ENCODE measurements at regions of chr19 and their contacts with region 1.

Region 1: DNA sequence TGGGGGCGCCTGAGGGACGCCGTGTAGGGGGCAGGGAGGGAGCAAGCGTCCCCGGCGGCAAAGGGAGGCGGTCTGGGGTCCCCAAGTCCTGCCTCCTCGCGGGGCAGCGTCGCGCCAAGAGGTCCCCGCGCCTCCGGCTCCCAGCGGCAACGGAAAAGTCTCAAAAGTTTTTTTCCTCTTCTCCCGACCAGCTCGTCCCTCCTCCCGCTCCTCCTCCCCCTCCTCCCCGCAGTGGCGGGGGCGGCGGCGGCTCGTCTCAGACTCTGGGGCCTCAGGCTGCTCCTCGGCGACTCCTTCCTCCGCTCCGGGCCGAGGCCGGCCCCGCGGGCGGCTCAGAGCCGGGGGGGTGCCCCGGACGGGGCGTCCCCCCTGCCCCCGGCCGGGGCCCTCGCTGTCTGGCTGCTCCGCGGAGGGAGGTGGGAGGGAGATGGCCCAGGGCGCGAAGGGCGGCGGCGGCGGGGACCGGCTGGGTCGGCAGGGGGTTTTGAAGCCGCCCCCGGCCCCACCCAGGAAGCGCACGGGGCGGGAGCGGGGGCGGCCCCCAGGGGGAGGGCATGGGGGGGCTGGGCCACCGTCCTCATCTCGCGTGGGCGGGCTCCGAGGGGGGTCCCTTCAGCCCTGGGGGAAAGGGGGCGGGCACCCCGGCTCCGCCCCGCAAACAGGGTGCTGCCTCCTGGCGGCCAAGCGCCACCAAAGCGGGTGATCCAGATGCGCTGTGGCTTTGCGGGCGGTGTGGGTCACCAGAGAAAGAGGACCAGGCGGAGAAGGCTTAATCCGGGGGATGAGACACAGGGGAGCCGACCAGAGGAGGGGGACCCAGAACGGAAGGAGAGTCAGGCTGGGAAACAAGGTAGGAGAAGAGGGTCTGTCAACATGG is at the start of gene TGFB1:
- DNase-seq: peak; percentile 96
- ATAC-seq: peak; percentile 45
- H3K4me3 Mint-ChIP-seq: peak within 1 kb of the TSS; percentile 96
- H3K27ac Mint-ChIP-seq: peak within 1 kb of the TSS; percentile 97
- H3K4me1 Mint-ChIP-seq: peaks cover 58% of the 10 kb centered on the region
- H3K27me3 Mint-ChIP-seq: no peaks in the 10 kb centered on the region
- total RNA-seq, gene TGFB1: 86.2 to 99.0 TPM

Region 2: DNA sequence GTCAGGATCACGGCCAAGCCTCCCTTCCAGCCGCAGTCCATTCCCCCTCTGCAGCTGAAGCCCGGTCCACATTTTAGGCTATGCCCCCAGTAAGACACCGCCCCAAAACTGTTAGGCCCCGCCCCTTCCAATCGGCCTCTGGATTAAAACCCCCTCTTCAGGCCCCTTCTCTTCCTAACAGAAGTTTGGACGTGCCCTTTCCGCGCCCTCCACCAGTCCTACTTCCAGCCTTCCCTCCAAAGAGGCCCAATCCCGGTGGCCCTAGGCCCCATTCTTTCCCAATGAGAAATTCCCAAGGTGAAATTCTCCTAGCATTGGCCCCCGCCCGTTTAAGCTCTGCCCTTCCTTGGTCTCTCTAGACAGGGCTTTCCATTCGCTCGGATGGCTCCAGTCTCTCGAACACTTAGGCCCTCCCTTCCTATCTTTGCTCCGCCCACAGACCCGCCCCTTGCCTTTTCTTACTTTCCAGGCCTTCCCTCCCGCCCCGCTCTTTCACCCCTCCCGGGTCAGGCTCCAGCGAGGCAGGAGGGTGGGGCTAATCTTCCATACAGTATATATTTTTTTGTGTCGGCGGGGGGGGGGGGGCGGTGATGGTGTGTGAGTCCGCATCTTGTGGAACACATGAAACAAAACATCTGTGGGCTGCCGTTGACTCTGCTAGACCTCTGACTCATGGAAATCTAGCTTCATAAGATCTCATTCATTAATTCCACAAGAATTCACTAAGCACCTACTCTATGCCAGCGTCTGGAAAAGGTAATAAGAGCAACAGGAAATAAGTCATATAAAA is 738.9 kb before region 1 on chr19:
- CTCF ChIA-PET with region 1: no interaction called
- POLR2A ChIA-PET with region 1: no interaction called
- intact Hi-C with region 1: loop called in 1 of 2 experiments (anchors 5 kb)
- DNase-seq: peak; percentile 98
- ATAC-seq: peak; percentile 55
- H3K4me3 Mint-ChIP-seq: peak overlapping the region; percentile 99
- H3K27ac Mint-ChIP-seq: peak overlapping the region; percentile 100
- H3K4me1 Mint-ChIP-seq: peaks cover 58% of the 10 kb centered on the region
- H3K27me3 Mint-ChIP-seq: no peaks in the 10 kb centered on the region

Region 3: DNA sequence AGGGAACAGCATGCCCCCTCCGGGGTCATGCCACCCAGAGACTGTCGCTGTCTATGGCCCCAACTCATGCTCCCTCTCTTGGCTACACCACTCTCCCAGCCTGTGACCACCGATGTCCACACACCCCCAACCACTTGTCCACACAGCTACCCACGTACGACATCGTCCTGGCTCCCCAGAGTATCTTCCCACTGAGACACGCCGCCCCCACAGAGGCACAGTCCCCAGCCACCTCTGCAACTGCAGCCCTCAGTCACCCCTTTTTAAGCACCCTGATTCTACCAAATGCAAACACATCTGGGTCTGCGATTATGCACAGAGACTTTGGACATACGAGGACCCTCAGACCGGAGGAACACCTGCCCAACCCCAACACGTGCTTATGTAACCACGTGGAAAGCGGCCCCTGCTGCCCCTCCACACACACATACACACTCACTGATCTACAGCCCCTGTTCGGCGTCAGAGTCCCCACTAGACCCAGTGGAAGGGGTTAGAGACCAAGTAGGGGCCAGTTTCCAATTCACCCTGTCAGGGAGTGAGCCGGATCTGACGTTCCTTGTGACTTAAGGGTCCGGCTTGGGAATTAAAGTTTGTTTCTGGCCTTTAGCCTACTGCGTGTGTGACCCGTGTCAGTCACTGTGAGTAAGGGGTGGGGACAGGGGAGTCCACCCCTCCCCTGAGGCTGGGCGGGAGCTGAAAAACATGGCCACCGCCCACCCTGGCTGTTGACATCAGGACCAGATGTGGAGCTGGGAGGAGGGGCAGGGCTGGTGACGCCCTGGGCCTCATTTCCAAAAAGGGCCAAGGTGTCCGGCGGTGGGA is 146.6 kb before region 1 on chr19:
- CTCF ChIA-PET with region 1: no interaction called
- POLR2A ChIA-PET with region 1: no interaction called
- intact Hi-C with region 1: loop called in 1 of 2 experiments (anchors 2 kb)
- DNase-seq: no peak
- ATAC-seq: no peak
- H3K4me3 Mint-ChIP-seq: no peak overlapping the region
- H3K27ac Mint-ChIP-seq: no peak overlapping the region
- H3K4me1 Mint-ChIP-seq: peaks cover 2% of the 10 kb centered on the region
- H3K27me3 Mint-ChIP-seq: no peaks in the 10 kb centered on the region

Region 4: DNA sequence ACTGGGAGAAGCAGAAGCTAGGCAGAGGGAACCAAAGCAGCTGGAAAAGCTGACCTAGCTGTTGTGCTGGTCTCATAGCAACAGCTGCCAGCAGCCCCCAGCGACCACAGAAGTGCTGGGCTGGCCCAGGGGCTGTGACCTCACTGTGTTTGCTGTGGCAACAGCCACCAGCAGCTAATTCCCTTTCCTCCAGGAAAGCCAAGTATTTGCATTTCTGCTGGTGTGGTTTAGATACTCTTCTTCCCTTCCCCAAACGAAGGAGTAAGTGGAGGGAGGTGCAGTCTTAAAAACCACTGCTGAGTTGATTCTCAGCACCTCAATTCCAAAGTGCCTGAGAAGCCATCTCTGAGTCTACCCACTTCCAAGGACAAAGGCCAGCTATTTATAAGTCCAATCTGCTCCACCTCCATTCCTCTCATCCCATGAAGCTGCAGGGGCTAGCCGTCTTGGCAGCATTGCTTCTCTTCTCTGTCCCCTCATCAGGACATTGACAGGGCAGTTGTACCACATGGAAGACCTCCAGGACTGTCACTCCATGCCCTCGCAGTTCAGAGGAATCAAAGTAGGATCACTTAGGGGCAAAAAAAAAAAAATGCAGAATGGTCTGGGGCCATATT is 55.2 kb before region 1 on chr19:
- CTCF ChIA-PET with region 1: no interaction called
- POLR2A ChIA-PET with region 1: no interaction called
- intact Hi-C with region 1: no loop called
- DNase-seq: no peak
- ATAC-seq: no peak
- H3K4me3 Mint-ChIP-seq: no peak overlapping the region
- H3K27ac Mint-ChIP-seq: peak overlapping the region; percentile 68
- H3K4me1 Mint-ChIP-seq: peaks cover 91% of the 10 kb centered on the region
- H3K27me3 Mint-ChIP-seq: no peaks in the 10 kb centered on the region

Region 5: DNA sequence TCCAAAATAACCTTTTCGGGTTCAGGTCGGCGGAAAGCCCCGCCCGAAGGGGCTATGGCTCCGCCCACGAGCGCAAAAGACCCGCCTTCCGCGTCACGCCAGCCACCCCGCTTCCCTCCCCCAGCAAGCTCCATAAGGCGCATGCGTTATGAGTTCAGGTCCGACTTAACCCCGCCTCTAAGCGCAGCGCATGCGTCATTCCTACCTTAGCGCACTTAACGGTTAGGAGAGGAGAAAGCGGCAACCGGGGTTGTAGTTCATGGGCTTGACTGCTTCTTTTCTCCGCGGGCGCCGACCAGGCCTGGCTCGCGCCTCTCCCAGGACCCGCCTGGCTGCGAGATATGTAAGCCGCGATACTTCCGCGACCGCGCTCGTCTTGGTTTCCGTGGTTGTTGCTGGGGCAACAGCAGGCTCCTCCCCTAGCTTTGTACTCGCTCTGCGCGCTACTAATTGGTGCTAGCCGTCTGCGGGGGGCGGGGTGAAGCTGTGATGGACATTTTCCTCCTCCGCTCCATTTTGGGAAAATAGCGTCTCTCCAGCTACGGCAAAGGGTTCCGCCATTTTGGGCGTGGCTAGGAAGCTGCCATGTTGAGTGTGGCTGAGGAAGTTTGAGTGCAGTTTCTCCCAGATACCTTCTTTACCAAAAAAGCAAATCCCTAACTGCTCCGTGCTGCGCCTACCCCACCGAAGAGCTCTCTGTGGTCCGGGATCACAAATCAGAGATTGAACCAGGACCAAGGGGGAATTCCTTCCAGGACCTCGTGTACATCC is 10.2 kb after region 1 on chr19 and contains the start of gene B9D2:
- CTCF ChIA-PET with region 1: interaction called, 24 read pairs
- POLR2A ChIA-PET with region 1: interaction called, 16 read pairs
- intact Hi-C with region 1: loop called (anchors 1 kb)
- DNase-seq: peak; percentile 99
- ATAC-seq: peak; percentile 95
- H3K4me3 Mint-ChIP-seq: peak within 1 kb of the TSS; percentile 92
- H3K27ac Mint-ChIP-seq: peak within 1 kb of the TSS; percentile 98
- H3K4me1 Mint-ChIP-seq: peaks cover 29% of the 10 kb centered on the region
- H3K27me3 Mint-ChIP-seq: no peaks in the 10 kb centered on the region
- total RNA-seq, gene B9D2: 4.0 to 5.2 TPM

Region 6: GRCh38 chr19:41439441-41440222 is 85.9 kb after region 1 on chr19 and contains the start of gene DMAC2:
- CTCF ChIA-PET with region 1: interaction called, 5 read pairs
- POLR2A ChIA-PET with region 1: interaction called, 3 read pairs
- intact Hi-C with region 1: loop called in 1 of 2 experiments (anchors 1 kb)
- DNase-seq: peak; percentile 98
- ATAC-seq: peak; percentile 97
- H3K4me3 Mint-ChIP-seq: no peak within 1 kb of the TSS
- H3K27ac Mint-ChIP-seq: peak within 1 kb of the TSS; percentile 2
- H3K4me1 Mint-ChIP-seq: peaks cover 18% of the 10 kb centered on the region
- H3K27me3 Mint-ChIP-seq: peaks cover 2% of the 10 kb centered on the region
- total RNA-seq, gene DMAC2: 52.5 to 66.3 TPM

Region 7: GRCh38 chr19:41554907-41555306 is 201.2 kb after region 1 on chr19:
- CTCF ChIA-PET with region 1: interaction called, 5 read pairs
- POLR2A ChIA-PET with region 1: interaction called, 3 read pairs
- intact Hi-C with region 1: loop called in 1 of 2 experiments (anchors 5 kb)
- DNase-seq: peak; percentile 43
- ATAC-seq: peak; percentile 37
- H3K4me3 Mint-ChIP-seq: peak overlapping the region; percentile 42
- H3K27ac Mint-ChIP-seq: peak overlapping the region; percentile 94
- H3K4me1 Mint-ChIP-seq: peaks cover 74% of the 10 kb centered on the region
- H3K27me3 Mint-ChIP-seq: no peaks in the 10 kb centered on the region

Measured in activated CD4-positive, alpha-beta T cell treated with anti-CD3 and anti-CD28 coated beads for 36 hours (primary cell).